CD8-positive, alpha-beta T cell (primary cell): ENCODE measurements at regions of chr6 and their contacts with region 1.

Region 1: GRCh38 chr6:53725791-53726431 is 60.4 kb upstream of the KLHL31 start:
- DNase-seq: peak; percentile 47 to 84 (median 78)
- ATAC-seq: peak; percentile 95
- H3K4me3 ChIP-seq: no peak overlapping the region
- H3K4me3 Mint-ChIP-seq: no peak overlapping the region
- H3K27ac ChIP-seq: no peak overlapping the region
- H3K27ac Mint-ChIP-seq: no peak overlapping the region
- H3K4me1 ChIP-seq: peaks cover 3% of the 10 kb centered on the region
- H3K4me1 Mint-ChIP-seq: peaks cover 6% of the 10 kb centered on the region
- H3K27me3 ChIP-seq: peaks cover 0 to 3% of the 10 kb centered on the region in 2 experiments
- H3K27me3 Mint-ChIP-seq: peaks cover 19% of the 10 kb centered on the region
- CTCF ChIP-seq: peak; percentile 88

Region 2: GRCh38 chr6:53484476-53485280 is 241.2 kb before region 1 on chr6:
- CTCF ChIA-PET with region 1: interaction called, 19 read pairs
- POLR2A ChIA-PET with region 1: no interaction called
- intact Hi-C with region 1: no loop called
- DNase-seq: peak; percentile 42 to 80 (median 74)
- ATAC-seq: peak; percentile 79
- H3K4me3 ChIP-seq: no peak overlapping the region
- H3K4me3 Mint-ChIP-seq: no peak overlapping the region
- H3K27ac ChIP-seq: no peak overlapping the region
- H3K27ac Mint-ChIP-seq: no peak overlapping the region
- H3K4me1 ChIP-seq: no peaks in the 10 kb centered on the region
- H3K4me1 Mint-ChIP-seq: peaks cover 10% of the 10 kb centered on the region
- H3K27me3 ChIP-seq: peaks cover 0 to 4% of the 10 kb centered on the region in 2 experiments
- H3K27me3 Mint-ChIP-seq: peaks cover 33% of the 10 kb centered on the region
- CTCF ChIP-seq: peak; percentile 98

Region 3: DNA sequence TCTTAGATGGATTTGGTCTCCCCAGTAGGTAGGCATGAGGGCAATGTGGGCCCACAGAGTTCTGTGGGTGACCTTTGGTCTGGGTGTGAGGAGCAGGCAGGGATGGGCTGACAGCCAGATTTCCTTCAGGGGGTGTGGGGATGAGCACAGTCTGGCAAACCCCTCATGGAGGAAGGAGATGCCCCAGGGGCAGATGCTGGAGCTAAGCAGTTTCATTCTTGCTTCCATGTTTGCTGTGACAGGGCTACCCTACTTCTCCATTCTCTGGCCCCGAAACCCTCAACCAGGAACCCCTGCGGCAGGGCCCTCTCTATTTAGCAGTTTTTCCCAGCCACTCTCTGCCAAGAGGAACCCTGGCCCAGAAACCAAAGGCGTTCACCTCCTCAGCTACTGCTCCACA is 221.4 kb before region 1 on chr6:
- CTCF ChIA-PET with region 1: interaction called, 32 read pairs
- POLR2A ChIA-PET with region 1: no interaction called
- intact Hi-C with region 1: no loop called
- DNase-seq: no peak
- ATAC-seq: no peak
- H3K4me3 ChIP-seq: no peak overlapping the region
- H3K4me3 Mint-ChIP-seq: no peak overlapping the region
- H3K27ac ChIP-seq: no peak overlapping the region
- H3K27ac Mint-ChIP-seq: no peak overlapping the region
- H3K4me1 ChIP-seq: no peaks in the 10 kb centered on the region
- H3K4me1 Mint-ChIP-seq: no peaks in the 10 kb centered on the region
- H3K27me3 ChIP-seq: no peaks in the 10 kb centered on the region
- H3K27me3 Mint-ChIP-seq: no peaks in the 10 kb centered on the region
- CTCF ChIP-seq: no peak

Region 4: DNA sequence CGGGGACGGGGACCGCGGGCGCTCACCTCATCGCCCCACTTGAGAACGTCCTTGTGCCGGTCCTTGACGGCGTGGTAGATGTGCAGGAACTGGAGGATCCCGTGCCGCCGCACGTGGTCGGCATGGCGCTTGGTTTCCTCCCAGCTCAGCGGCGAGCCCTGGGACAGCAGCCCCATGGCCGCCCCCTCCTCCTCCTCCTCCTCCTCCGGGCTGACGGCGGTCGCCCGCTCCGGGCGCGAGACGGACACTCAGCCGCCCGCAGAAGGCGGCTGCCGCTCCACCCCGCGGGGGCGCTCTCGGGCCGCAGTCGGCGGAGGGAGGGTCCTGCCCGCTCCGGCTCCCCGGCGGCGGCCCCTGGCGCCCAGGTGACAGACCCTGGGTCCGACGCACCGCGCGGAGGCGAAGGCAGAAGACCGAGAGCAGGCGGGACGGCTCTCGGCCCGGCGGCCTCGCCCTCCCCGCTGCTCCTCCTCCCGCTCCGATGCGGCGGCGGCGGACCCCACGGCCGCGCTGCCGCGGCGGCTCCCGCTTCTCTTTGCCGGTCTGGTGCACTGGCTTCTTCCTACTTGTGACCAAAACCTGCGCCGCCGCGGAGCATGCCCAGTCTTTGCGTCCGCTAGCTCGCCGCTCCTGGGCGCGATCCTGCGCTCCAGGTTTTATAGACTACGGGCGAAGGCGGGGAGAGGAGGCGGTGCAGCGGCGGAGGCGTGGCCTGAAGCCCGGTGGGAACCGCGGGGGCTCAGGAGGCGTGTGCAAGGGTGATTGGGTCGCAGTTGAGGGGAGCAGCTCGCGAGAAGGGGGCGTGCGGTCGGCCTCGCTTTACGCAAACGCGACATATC is 181.2 kb before region 1 on chr6 and contains the start of gene GCLC:
- CTCF ChIA-PET with region 1: interaction called, 6 read pairs
- POLR2A ChIA-PET with region 1: no interaction called
- intact Hi-C with region 1: loop called in 1 of 2 experiments (anchors 2 kb)
- DNase-seq: peak; percentile 75 to 95 (median 87)
- ATAC-seq: peak; percentile 67
- H3K4me3 ChIP-seq: peak within 1 kb of the TSS; percentile 69 to 79
- H3K4me3 Mint-ChIP-seq: peak within 1 kb of the TSS; percentile 99
- H3K27ac ChIP-seq: peak within 1 kb of the TSS; percentile 48 to 62
- H3K27ac Mint-ChIP-seq: peak within 1 kb of the TSS; percentile 89
- H3K4me1 ChIP-seq: peaks cover 39% of the 10 kb centered on the region
- H3K4me1 Mint-ChIP-seq: peaks cover 68% of the 10 kb centered on the region
- H3K27me3 ChIP-seq: no peaks in the 10 kb centered on the region
- H3K27me3 Mint-ChIP-seq: no peaks in the 10 kb centered on the region
- CTCF ChIP-seq: peak; percentile 80
- total RNA-seq, gene GCLC: 13.1 to 13.6 TPM

Region 5: GRCh38 chr6:53701333-53702218 is 24.3 kb before region 1 on chr6:
- CTCF ChIA-PET with region 1: interaction called, 14 read pairs
- POLR2A ChIA-PET with region 1: no interaction called
- intact Hi-C with region 1: no loop called
- DNase-seq: peak in 1 of 9 experiments; percentile 19
- ATAC-seq: peak; percentile 84
- H3K4me3 ChIP-seq: no peak overlapping the region
- H3K4me3 Mint-ChIP-seq: no peak overlapping the region
- H3K27ac ChIP-seq: no peak overlapping the region
- H3K27ac Mint-ChIP-seq: no peak overlapping the region
- H3K4me1 ChIP-seq: no peaks in the 10 kb centered on the region
- H3K4me1 Mint-ChIP-seq: peaks cover 8% of the 10 kb centered on the region
- H3K27me3 ChIP-seq: no peaks in the 10 kb centered on the region
- H3K27me3 Mint-ChIP-seq: no peaks in the 10 kb centered on the region
- CTCF ChIP-seq: no peak

Region 6: DNA sequence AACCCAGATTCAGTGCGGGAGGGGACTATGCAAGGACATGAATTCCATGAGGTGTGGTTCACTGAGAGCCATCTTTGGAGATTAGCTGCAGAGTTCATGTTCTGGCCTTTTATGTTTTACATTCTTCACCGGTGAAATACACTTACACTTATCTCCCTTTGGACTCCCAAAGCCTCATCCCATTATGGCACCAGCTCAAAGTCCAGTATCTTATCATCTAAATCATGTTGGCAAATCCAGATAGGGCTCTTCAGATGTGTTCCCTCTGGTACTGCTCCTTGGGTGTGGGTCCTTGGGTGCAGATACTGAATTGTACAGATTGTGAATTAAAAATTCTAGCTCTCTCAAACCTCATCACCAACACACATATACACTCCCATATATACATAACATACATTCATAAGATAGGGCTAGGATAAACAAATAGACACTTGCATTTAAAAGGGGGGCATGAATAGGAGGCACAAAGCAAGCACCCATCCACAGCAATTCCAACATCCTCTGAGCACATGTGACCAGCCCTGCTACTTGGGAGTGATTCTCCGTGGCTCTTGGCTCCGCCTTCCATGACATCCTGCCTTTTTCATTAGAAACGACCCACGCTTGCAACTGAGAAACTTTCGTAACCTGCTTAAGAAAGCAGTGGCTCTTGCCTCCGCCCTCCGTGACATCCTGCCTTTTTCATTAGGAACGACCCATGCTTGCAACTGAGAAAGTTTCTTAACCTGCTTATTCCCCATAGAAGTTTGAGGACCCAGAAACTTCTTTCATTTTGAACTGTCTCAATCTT is 15.3 kb after region 1 on chr6:
- CTCF ChIA-PET with region 1: interaction called, 29 read pairs
- POLR2A ChIA-PET with region 1: no interaction called
- intact Hi-C with region 1: no loop called
- DNase-seq: peak in 2 of 9 experiments; percentile 10 to 19
- ATAC-seq: peak; percentile 26
- H3K4me3 ChIP-seq: peak overlapping the region in 1 of 2 experiments; percentile 15
- H3K4me3 Mint-ChIP-seq: peak overlapping the region; percentile 54
- H3K27ac ChIP-seq: no peak overlapping the region
- H3K27ac Mint-ChIP-seq: no peak overlapping the region
- H3K4me1 ChIP-seq: peaks cover 6% of the 10 kb centered on the region
- H3K4me1 Mint-ChIP-seq: peaks cover 12% of the 10 kb centered on the region
- H3K27me3 ChIP-seq: no peaks in the 10 kb centered on the region
- H3K27me3 Mint-ChIP-seq: peaks cover 11% of the 10 kb centered on the region
- CTCF ChIP-seq: no peak

Region 7: GRCh38 chr6:53794720-53795253 is 68.9 kb after region 1 on chr6 and contains the start of gene LRRC1:
- CTCF ChIA-PET with region 1: interaction called, 6 read pairs
- POLR2A ChIA-PET with region 1: no interaction called
- intact Hi-C with region 1: loop called in 1 of 2 experiments (anchors 2 kb)
- DNase-seq: peak; percentile 59 to 90 (median 82)
- ATAC-seq: peak; percentile 64
- H3K4me3 ChIP-seq: peak within 1 kb of the TSS; percentile 88
- H3K4me3 Mint-ChIP-seq: peak within 1 kb of the TSS; percentile 96
- H3K27ac ChIP-seq: peak within 1 kb of the TSS; percentile 41 to 46
- H3K27ac Mint-ChIP-seq: peak within 1 kb of the TSS; percentile 87
- H3K4me1 ChIP-seq: peaks cover 13% of the 10 kb centered on the region
- H3K4me1 Mint-ChIP-seq: peaks cover 27% of the 10 kb centered on the region
- H3K27me3 ChIP-seq: no peaks in the 10 kb centered on the region
- H3K27me3 Mint-ChIP-seq: peaks cover 19% of the 10 kb centered on the region
- CTCF ChIP-seq: no peak
- total RNA-seq, gene LRRC1: 0.47 to 0.87 TPM